ENCODE measurements at regions of chr5 and their contacts with region 1.

Region 1: DNA sequence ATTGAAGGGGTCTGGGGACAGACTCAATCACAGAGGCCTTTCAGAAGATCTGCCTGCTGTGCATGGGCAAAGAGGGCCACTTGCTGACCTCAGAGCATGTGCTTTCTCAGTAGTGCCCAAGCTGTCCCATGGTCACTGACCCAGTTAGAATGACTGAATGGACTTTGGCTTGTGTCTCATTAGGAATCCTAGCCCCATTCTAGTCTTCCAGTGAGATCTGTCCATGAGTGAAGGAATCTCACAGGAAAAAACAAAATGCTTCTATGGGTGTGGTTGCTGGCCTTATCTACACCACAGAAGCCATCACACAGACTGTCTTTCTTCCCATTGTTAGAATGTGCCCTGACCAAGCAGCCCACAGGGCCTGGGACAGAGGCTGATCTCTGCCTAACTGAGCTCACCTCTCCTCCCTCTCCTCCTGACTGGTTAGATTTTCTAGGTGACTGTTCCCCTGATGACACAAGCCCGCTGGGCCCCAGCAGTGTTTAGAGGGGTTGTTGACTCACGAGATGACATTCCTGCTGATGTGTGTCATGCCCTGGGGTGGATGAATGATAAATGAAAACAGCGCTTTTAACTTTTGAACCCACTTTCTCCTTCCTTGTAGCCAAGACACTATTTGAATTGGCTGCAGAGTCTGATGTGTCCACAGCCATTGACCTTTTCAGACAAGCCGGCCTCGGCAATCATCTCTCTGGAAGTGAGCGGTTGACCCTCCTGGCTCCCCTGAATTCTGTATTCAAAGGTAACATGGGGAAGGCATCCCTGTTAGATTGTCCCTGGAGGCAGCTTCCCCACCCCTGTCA is 24.8 kb downstream of the TGFBI start:
- DNase-seq: peak; percentile 89 to 96
- H3K4me3 ChIP-seq: no peak overlapping the region
- H3K27ac ChIP-seq: peak overlapping the region; percentile 85
- H3K4me1 ChIP-seq: peaks cover 51% of the 10 kb centered on the region
- H3K27me3 ChIP-seq: no peaks in the 10 kb centered on the region
- CTCF ChIP-seq: no peak

Region 2: DNA sequence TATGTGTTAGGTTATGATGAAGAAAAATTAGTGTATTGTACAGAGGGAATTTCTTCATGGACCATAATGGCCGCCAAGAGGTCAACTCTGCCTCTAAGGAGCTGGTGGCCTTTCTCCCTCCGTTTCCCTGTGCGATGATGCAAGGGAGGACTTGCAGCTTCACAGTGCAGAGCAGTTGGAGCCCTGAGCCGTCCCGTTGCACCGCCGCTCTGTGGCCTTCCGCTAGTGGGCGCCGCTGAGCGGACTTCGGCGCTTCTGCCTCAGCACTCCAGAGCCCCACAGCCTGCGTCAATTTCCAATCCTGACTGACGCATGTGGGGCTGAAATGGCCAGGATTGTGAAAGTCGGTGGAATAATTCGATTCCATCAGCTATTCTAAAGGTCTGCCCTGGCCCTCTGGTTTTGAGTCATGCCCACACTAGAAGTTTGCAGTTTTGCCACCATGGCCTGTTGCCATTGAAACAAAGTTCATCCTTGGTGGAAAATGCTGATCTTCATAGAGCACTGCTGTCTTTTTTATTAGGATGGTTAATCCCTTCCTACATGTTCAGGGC is 76.1 kb before region 1 on chr5:
- CTCF ChIA-PET with region 1: interaction called, 3 read pairs
- POLR2A ChIA-PET with region 1: interaction called, 3 read pairs
- intact Hi-C with region 1: loop called (anchors 2 kb)
- DNase-seq: peak in 1 of 2 experiments; percentile 77
- H3K4me3 ChIP-seq: no peak overlapping the region
- H3K27ac ChIP-seq: no peak overlapping the region
- H3K4me1 ChIP-seq: no peaks in the 10 kb centered on the region
- H3K27me3 ChIP-seq: no peaks in the 10 kb centered on the region
- CTCF ChIP-seq: no peak

Region 3: GRCh38 chr5:136014049-136015002 is 39.2 kb before region 1 on chr5:
- CTCF ChIA-PET with region 1: no interaction called
- POLR2A ChIA-PET with region 1: interaction called, 3 read pairs
- intact Hi-C with region 1: loop called (anchors 5 kb)
- DNase-seq: no peak
- H3K4me3 ChIP-seq: no peak overlapping the region
- H3K27ac ChIP-seq: no peak overlapping the region
- H3K4me1 ChIP-seq: peaks cover 59% of the 10 kb centered on the region
- H3K27me3 ChIP-seq: no peaks in the 10 kb centered on the region
- CTCF ChIP-seq: no peak

Region 4: GRCh38 chr5:136020383-136021015 is 33.0 kb before region 1 on chr5:
- CTCF ChIA-PET with region 1: no interaction called
- POLR2A ChIA-PET with region 1: no interaction called
- intact Hi-C with region 1: loop called (anchors 1 kb)
- DNase-seq: peak; percentile 85 to 94
- H3K4me3 ChIP-seq: peak overlapping the region; percentile 28; the same call in 1 of the 2 replicates
- H3K27ac ChIP-seq: peak overlapping the region; percentile 97
- H3K4me1 ChIP-seq: peaks cover 65% of the 10 kb centered on the region
- H3K27me3 ChIP-seq: no peaks in the 10 kb centered on the region
- CTCF ChIP-seq: no peak

Region 5: GRCh38 chr5:136028782-136029742 is 24.5 kb before region 1 on chr5 and contains the start of gene TGFBI:
- CTCF ChIA-PET with region 1: interaction called, 4 read pairs
- POLR2A ChIA-PET with region 1: interaction called, 6 read pairs
- intact Hi-C with region 1: loop called (anchors 2 kb)
- DNase-seq: peak; percentile 55 to 75
- H3K4me3 ChIP-seq: peak within 1 kb of the TSS; percentile 94
- H3K27ac ChIP-seq: peak within 1 kb of the TSS; percentile 38; the same call in 1 of the 2 replicates
- H3K4me1 ChIP-seq: peaks cover 54% of the 10 kb centered on the region
- H3K27me3 ChIP-seq: no peaks in the 10 kb centered on the region
- CTCF ChIP-seq: no peak
- total RNA-seq, gene TGFBI: 430 and 437 TPM in 2 replicates

Measured in PC-9 (cell line).